ENCODE measurements at regions of chr2 and their contacts with region 1.

Region 1: DNA sequence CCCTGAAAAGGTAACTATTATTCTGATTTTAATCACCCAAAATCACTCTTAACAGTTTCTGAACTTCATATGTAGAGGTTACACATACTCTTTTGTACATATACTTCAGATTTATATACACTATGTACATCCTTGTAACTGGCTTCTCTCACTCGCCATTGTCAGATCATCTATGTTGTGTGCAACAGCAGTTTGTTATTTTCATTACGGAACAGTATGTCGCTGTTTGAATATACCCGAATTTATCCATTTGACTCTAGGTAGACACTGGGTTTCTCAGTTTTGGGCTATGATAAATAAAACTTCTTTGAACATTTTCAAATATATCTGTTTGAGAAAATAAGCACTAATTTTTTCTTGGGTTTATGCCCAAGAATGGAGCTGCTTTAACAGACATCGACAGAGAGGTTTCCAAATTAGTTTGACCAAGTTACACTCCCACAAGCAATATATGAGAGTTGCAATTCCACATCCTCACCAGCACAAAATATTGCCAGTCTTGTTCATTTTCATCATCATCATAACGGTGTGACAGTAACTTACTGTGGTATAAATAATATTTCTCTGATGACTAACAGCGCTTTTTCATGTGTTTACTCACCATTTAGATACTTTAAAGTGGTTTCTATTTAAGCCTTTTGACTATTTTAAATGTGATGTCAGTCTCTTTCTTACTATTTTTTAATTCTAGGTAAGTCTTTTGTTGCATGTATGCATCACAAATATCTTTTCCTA is 80.9 kb downstream of the SMC6 start:
- DNase-seq: no peak
- ATAC-seq: no peak
- H3K4me3 ChIP-seq: no peak overlapping the region
- H3K27ac ChIP-seq: no peak overlapping the region
- H3K4me1 ChIP-seq: no peaks in the 10 kb centered on the region
- H3K27me3 ChIP-seq: no peaks in the 10 kb centered on the region
- CTCF ChIP-seq: no peak
- POLR2A ChIP-seq: no peak

Region 2: GRCh38 chr2:16773080-16773713 is 899.6 kb before region 1 on chr2:
- in situ Hi-C with region 1: loop called in 1 of 4 experiments (anchors 10 kb)
- intact Hi-C with region 1: loop called (anchors 5 kb)
- DNase-seq: no peak
- ATAC-seq: peak in 1 of 2 donors; percentile 50
- H3K4me3 ChIP-seq: no peak overlapping the region
- H3K27ac ChIP-seq: no peak overlapping the region
- H3K4me1 ChIP-seq: no peaks in the 10 kb centered on the region
- H3K27me3 ChIP-seq: no peaks in the 10 kb centered on the region
- CTCF ChIP-seq: peak in 2 of 5 experiments; percentile 24 to 29
- POLR2A ChIP-seq: no peak

Region 3: DNA sequence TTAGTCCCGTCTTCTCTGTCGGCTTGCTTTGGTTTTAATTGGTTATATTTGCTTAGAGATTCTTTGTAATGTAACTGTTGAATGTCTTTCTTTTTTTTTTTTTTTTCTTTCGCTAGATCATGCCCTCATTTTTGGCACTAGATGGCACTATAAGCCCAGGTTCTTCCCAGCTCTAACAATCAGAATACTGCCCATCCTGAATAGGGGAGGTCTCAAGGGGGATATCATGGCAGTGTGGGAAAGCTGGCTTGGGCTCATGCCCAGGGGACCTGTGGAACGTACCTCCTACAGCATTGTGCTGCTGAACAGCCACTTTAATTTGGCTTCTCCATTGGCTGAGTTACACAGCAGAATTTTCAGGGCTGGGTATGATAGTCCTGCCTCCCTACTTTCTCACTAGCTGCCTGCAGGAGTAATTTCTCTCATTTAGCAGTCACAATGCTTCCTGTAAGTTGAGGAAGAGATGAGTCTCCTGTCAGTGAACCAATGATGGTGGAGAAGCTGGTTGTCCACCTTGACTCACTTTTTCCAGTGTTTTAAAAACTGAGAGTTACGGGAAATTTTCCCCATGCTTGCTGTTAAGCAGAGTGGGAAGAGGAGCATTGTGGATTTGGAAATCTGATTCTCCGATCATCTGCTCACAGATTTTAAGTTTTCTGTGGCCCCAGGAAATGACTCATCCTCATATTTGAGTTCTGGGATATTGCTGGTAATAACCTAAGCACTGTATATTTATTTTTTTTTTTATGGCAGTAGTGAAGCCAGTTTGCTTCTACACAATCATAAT is 201.7 kb before region 1 on chr2:
- in situ Hi-C with region 1: no loop called
- intact Hi-C with region 1: loop called (anchors 2 kb)
- DNase-seq: no peak
- ATAC-seq: no peak
- H3K4me3 ChIP-seq: no peak overlapping the region
- H3K27ac ChIP-seq: no peak overlapping the region
- H3K4me1 ChIP-seq: no peaks in the 10 kb centered on the region
- H3K27me3 ChIP-seq: no peaks in the 10 kb centered on the region
- CTCF ChIP-seq: peak in 3 of 5 experiments; percentile 17 to 41 (median 24)
- POLR2A ChIP-seq: no peak

Region 4: DNA sequence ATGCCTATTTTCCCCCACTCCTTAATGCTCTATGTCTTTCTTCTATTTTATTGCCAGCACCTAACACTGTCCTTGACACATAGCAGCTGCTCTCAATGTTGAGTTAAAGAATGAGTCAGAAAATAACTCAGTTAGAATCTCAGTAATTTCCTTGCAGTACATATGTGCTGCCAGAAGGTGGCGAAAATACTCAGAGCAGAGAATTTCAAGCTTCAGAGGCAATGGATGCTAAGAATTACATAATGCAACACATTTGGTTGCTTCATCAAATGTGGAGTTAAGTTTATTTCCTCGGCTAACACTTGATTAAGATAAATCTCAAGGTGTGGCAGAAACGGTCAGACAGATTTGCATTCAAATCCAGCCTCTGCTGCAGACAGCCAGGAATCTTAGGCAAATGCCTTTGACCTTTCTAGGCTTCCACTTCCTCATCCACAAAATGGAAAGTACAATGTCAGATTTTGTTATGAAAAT is 26.6 kb before region 1 on chr2:
- in situ Hi-C with region 1: no loop called
- intact Hi-C with region 1: loop called (anchors 1 kb)
- DNase-seq: peak; percentile 23 to 25
- ATAC-seq: peak; percentile 74 to 88
- H3K4me3 ChIP-seq: no peak overlapping the region
- H3K27ac ChIP-seq: no peak overlapping the region
- H3K4me1 ChIP-seq: peaks cover 8 to 19% of the 10 kb centered on the region in 2 donors
- H3K27me3 ChIP-seq: no peaks in the 10 kb centered on the region
- CTCF ChIP-seq: peak; percentile 73 to 88 (median 84)
- POLR2A ChIP-seq: no peak

Region 5: DNA sequence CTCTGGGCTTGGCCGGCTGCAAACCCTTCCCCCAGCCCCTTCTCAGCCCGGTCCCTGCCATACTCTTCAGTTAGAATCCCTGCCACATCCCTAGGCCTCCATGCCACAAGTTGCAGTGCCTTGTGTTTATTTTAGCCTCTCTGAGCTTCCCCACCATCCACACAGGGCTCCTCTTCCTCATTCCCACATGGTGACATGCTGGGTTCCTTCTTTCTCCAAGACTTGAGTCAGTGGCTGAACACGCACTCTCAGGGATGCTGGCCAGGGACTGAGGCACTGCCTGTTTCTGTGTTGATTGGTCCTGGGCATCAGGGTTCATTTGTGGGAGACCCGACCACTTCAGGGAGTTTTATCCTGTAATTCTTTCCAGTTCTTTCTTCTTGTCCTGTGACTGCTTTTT is 262.0 kb after region 1 on chr2:
- in situ Hi-C with region 1: no loop called
- intact Hi-C with region 1: no loop called
- DNase-seq: no peak
- ATAC-seq: no peak
- H3K4me3 ChIP-seq: no peak overlapping the region
- H3K27ac ChIP-seq: no peak overlapping the region
- H3K4me1 ChIP-seq: peaks cover 35 to 59% of the 10 kb centered on the region in 2 donors
- H3K27me3 ChIP-seq: no peaks in the 10 kb centered on the region
- CTCF ChIP-seq: no peak
- POLR2A ChIP-seq: no peak